MCF 10A (cell line): ENCODE measurements at regions of chrX and their contacts with region 1.

Region 1: GRCh38 chrX:123833387-123833786 is 26.5 kb upstream of the XIAP start:
- DNase-seq: peak; percentile 75
- H3K4me3 Mint-ChIP-seq: no peak overlapping the region
- H3K27ac Mint-ChIP-seq: no peak overlapping the region
- H3K4me1 Mint-ChIP-seq: peaks cover 6% of the 10 kb centered on the region
- H3K27me3 Mint-ChIP-seq: peaks cover 11% of the 10 kb centered on the region
- CTCF ChIP-seq: peak; percentile 65

Region 2: GRCh38 chrX:123854329-123854728 is 20.9 kb after region 1 on chrX:
- CTCF ChIA-PET with region 1: interaction called, 10 read pairs
- POLR2A ChIA-PET with region 1: interaction called, 40 read pairs
- intact Hi-C with region 1: no loop called
- DNase-seq: no peak
- H3K4me3 Mint-ChIP-seq: no peak overlapping the region
- H3K27ac Mint-ChIP-seq: no peak overlapping the region
- H3K4me1 Mint-ChIP-seq: peaks cover 6% of the 10 kb centered on the region
- H3K27me3 Mint-ChIP-seq: no peaks in the 10 kb centered on the region
- CTCF ChIP-seq: no peak

Region 3: DNA sequence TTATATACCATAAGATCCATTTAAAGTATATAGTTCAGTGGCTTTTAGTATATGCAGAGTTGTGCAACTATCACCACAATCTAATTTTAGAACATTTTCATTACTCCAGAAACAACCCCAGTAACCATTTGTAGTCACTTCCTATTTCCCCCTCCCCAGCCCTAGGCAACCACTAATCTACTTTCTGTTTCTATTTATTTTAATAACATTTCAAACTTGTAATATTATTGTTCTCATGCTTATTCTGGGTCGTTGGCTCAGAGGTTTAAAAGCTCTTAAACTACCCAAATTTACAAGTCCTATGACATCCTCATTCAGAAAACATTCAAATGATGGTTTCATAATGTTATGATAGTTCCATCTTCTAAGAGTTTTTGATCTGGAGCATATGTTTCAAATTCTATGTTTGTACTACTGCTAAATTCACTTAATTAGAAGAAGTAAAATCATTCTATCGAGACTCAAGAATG is 44.9 kb after region 1 on chrX:
- CTCF ChIA-PET with region 1: interaction called, 36 read pairs
- POLR2A ChIA-PET with region 1: interaction called, 4 read pairs
- intact Hi-C with region 1: no loop called
- DNase-seq: peak; percentile 4
- H3K4me3 Mint-ChIP-seq: no peak overlapping the region
- H3K27ac Mint-ChIP-seq: no peak overlapping the region
- H3K4me1 Mint-ChIP-seq: no peaks in the 10 kb centered on the region
- H3K27me3 Mint-ChIP-seq: no peaks in the 10 kb centered on the region
- CTCF ChIP-seq: no peak

Region 4: DNA sequence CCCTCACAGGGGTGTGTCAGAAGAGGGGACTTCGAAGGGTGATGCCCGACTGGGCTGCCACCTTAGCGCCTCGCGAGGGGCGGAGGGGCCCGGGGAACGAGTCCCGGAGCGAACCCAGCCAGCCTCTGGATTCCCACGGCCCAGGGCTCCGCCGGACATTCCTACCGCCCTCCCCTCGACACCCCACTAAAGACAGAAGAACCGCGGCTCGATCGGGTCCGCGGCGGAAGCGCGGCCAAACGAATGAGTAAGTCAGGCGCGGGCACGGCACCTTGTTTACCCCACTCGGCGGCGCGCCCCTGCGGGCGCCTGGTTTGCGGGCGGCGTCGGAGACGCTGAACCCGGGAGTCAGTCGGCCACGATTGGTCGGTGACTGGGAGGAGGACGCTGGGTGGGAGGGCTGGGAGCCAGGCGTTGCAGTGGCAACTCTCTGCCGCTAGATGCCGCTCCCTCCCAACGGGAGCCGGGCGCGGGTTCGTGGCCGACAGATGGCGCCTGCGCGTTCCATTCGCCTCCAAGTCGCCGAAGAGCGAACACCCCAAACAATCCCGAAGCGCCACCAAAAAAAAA is 126.7 kb after region 1 on chrX:
- CTCF ChIA-PET with region 1: interaction called, 20 read pairs
- POLR2A ChIA-PET with region 1: interaction called, 17 read pairs
- intact Hi-C with region 1: loop called (anchors 1 kb)
- DNase-seq: peak; percentile 88
- H3K4me3 Mint-ChIP-seq: peak overlapping the region; percentile 92
- H3K27ac Mint-ChIP-seq: peak overlapping the region; percentile 99
- H3K4me1 Mint-ChIP-seq: no peaks in the 10 kb centered on the region
- H3K27me3 Mint-ChIP-seq: no peaks in the 10 kb centered on the region
- CTCF ChIP-seq: peak; percentile 87

Region 5: GRCh38 chrX:124406294-124407014 is 573.1 kb after region 1 on chrX:
- CTCF ChIA-PET with region 1: no interaction called
- POLR2A ChIA-PET with region 1: no interaction called
- intact Hi-C with region 1: loop called (anchors 10 kb)
- DNase-seq: peak; percentile 87
- H3K4me3 Mint-ChIP-seq: no peak overlapping the region
- H3K27ac Mint-ChIP-seq: no peak overlapping the region
- H3K4me1 Mint-ChIP-seq: no peaks in the 10 kb centered on the region
- H3K27me3 Mint-ChIP-seq: no peaks in the 10 kb centered on the region
- CTCF ChIP-seq: peak; percentile 63